Left ventricle myocardium inferior (tissue), 1 donor: ENCODE measurements at regions of chr17 and their contacts with region 1.

Region 1: GRCh38 chr17:43779145-43780125 is 658 bp upstream of the DUSP3 start:
- DNase-seq: no peak
- H3K4me3 ChIP-seq: peak overlapping the region; percentile 95
- H3K27ac ChIP-seq: peak overlapping the region; percentile 100
- H3K4me1 ChIP-seq: peaks cover 51% of the 10 kb centered on the region
- H3K27me3 ChIP-seq: no peaks in the 10 kb centered on the region
- CTCF ChIP-seq: peak; percentile 28

Region 2: DNA sequence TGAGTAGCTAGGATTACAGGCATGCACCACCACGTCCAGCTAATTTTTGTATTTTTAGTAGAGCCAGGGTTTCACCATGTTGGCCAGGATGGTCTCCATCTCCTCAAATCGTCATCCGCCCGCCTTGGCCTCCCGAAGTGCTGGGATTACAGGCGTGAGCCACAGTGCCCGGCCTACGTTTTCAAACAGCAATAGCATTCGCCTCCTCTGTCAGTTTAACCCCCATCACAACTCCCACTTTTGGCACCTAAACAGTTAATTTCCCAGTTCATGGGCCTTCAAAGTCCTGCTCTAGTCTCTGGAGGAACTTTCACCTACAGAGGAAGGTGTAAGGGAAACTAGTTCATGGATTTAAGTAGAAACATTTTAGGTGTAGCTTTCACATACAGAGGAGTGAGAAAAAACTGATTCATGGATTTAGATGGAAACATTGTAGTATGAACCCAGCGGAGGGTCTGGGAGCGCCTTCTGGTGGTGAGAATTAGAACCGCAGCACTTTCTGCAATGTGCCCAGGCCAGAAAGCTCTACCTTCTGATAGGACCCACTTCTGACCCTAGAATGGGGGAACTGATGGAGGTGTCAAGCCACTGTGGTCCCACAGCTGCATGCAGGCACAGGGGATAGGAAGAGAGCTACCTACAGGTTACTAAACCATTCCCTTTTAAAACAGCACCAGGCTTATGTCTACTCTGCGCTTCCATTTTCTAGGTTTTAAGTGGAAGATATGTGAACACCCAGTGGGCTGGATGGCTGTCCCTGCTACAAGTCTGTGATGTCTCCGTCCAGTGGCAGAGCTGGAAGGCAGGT is 105.7 kb before region 1 on chr17:
- intact Hi-C with region 1: no loop called
- DNase-seq: peak; percentile 76
- H3K4me3 ChIP-seq: no peak overlapping the region
- H3K27ac ChIP-seq: no peak overlapping the region
- H3K4me1 ChIP-seq: peaks cover 21% of the 10 kb centered on the region
- H3K27me3 ChIP-seq: no peaks in the 10 kb centered on the region
- CTCF ChIP-seq: peak; percentile 98

Region 3: DNA sequence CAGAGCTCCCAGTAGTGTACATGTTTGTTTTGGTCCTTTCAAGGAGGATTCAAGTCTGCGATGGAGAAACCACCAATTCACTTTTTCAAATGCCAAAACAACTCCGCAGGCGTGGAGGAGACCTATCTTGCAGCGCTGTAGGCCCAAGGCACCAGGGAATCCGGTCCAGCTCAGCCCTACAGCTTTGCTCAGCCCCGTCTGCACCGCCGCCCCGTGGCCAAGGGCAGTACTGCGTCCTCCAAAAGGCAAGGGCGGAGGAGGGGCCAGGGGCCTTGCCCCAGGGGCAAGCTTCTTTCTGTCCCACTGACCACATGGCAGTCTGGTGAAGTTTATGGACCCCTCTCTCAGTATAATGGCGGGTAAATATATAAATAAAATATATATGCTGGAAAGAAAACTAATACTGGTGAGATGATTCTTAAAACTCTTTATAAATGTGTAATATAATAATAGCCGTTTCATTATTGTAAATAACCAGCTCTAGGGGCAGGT is 66.8 kb after region 1 on chr17:
- intact Hi-C with region 1: loop called (anchors 10 kb)
- DNase-seq: peak; percentile 88
- H3K4me3 ChIP-seq: peak overlapping the region; percentile 60
- H3K27ac ChIP-seq: peak overlapping the region; percentile 84
- H3K4me1 ChIP-seq: peaks cover 29% of the 10 kb centered on the region
- H3K27me3 ChIP-seq: no peaks in the 10 kb centered on the region
- CTCF ChIP-seq: peak; percentile 99

Region 4: GRCh38 chr17:43861024-43861621 is 81.7 kb after region 1 on chr17:
- intact Hi-C with region 1: no loop called
- DNase-seq: peak; percentile 73
- H3K4me3 ChIP-seq: peak overlapping the region; percentile 6
- H3K27ac ChIP-seq: peak overlapping the region; percentile 72
- H3K4me1 ChIP-seq: peaks cover 62% of the 10 kb centered on the region
- H3K27me3 ChIP-seq: no peaks in the 10 kb centered on the region
- CTCF ChIP-seq: no peak